HAP-1 (cell line): ENCODE measurements at regions of chr5 and their contacts with region 1.

Region 1: DNA sequence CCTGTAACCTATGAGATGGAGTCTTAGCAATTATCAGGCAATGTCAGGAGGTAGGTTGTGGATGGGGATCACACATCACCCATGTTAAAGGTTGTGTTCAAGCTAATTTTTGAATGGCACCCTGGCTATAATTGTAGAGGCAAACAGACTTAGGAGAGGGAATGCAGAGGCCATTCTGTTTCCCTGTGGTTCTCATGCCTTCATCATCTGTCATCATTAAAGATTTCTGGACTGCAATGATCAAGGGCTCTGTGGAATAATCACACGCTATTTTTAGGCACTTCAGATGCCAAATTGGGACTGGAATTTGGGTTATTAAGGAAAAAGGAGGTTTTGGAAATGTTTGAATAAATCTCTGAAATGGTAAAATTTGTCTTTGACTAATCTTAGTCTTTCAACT is 1065.4 kb downstream of the TAF11L14 start:
- DNase-seq: no peak
- H3K4me3 ChIP-seq: no peak overlapping the region
- H3K4me1 ChIP-seq: no peaks in the 10 kb centered on the region
- H3K27me3 ChIP-seq: no peaks in the 10 kb centered on the region

Region 2: GRCh38 chr5:18465833-18466591 is 233.7 kb before region 1 on chr5:
- in situ Hi-C with region 1: loop called (anchors 5 kb)
- DNase-seq: peak; percentile 74 to 88
- H3K4me3 ChIP-seq: no peak overlapping the region
- H3K4me1 ChIP-seq: no peaks in the 10 kb centered on the region
- H3K27me3 ChIP-seq: no peaks in the 10 kb centered on the region

Region 3: GRCh38 chr5:18797222-18797621 is 97.5 kb after region 1 on chr5:
- in situ Hi-C with region 1: no loop called
- DNase-seq: no peak
- H3K4me3 ChIP-seq: no peak overlapping the region
- H3K4me1 ChIP-seq: peaks cover 18% of the 10 kb centered on the region
- H3K27me3 ChIP-seq: no peaks in the 10 kb centered on the region

Region 4: GRCh38 chr5:19104948-19105347 is 405.3 kb after region 1 on chr5:
- in situ Hi-C with region 1: no loop called
- DNase-seq: no peak
- H3K4me3 ChIP-seq: no peak overlapping the region
- H3K4me1 ChIP-seq: no peaks in the 10 kb centered on the region
- H3K27me3 ChIP-seq: no peaks in the 10 kb centered on the region